Caco-2 (cell line): ENCODE measurements at regions of chr1 and their contacts with region 1.

Region 1: GRCh38 chr1:226062558-226063223 is at the start of gene H3-3A:
- DNase-seq: peak; percentile 97 to 98
- H3K4me3 ChIP-seq: peak within 1 kb of the TSS; percentile 93
- H3K4me3 Mint-ChIP-seq: peak within 1 kb of the TSS; percentile 97
- H3K27ac Mint-ChIP-seq: peak within 1 kb of the TSS; percentile 99
- H3K4me1 ChIP-seq: peaks cover 9% of the 10 kb centered on the region
- H3K4me1 Mint-ChIP-seq: peaks cover 24% of the 10 kb centered on the region
- H3K27me3 ChIP-seq: no peaks in the 10 kb centered on the region
- H3K27me3 Mint-ChIP-seq: no peaks in the 10 kb centered on the region
- CTCF ChIP-seq: no peak
- total RNA-seq, gene H3-3A: 512 and 554 TPM in 2 replicates

Region 2: GRCh38 chr1:226029093-226029496 is 33.6 kb before region 1 on chr1:
- CTCF ChIA-PET with region 1: interaction called, 4 read pairs
- POLR2A ChIA-PET with region 1: interaction called, 12 read pairs
- intact Hi-C with region 1: no loop called
- DNase-seq: peak; percentile 46 to 60
- H3K4me3 ChIP-seq: no peak overlapping the region
- H3K4me3 Mint-ChIP-seq: no peak overlapping the region
- H3K27ac Mint-ChIP-seq: peak overlapping the region; percentile 66
- H3K4me1 ChIP-seq: peaks cover 17% of the 10 kb centered on the region
- H3K4me1 Mint-ChIP-seq: no peaks in the 10 kb centered on the region
- H3K27me3 ChIP-seq: no peaks in the 10 kb centered on the region
- H3K27me3 Mint-ChIP-seq: no peaks in the 10 kb centered on the region
- CTCF ChIP-seq: no peak

Region 3: DNA sequence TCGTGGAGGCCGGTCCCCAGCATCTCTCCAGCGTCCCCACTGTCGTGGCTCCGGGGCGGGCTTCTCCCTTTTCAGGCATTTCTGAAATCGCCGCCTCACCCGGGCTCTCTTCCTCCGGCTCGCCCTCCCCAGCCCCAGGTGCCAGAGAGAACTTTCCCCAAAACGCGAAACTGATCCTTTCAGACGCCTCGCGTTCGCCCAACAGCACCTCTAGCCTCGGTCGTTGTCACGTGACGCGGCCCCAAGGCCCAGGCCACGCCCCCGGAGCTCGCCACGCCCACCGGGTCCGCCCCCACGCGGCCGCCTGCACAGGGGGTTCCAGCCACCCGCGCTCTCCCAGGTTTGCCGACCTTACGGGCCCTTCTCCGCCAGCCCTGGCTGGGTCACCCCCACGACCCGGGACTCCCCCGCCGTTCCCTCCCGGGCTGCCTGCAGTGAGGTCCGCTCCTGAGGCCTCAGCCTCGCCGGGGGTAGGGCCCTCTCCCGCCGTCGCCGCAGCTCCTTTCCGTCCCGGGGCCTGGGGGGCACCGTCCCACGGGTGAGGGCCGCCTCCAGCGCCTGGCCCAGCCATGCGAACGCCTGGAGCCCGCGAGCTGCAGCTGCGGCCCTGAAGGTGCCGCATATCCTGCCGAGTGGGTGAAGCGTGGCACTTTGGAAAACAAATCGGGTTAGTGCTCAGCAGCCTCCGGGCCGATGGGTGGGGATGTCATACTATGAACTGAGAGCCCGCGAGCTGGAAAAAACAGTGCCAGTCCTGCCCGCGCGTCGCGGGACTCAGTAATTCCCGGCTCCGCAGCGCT is 20.8 kb after region 1 on chr1:
- CTCF ChIA-PET with region 1: interaction called, 27 read pairs
- POLR2A ChIA-PET with region 1: interaction called, 14 read pairs
- intact Hi-C with region 1: loop called (anchors 1 kb)
- DNase-seq: peak; percentile 88 to 95
- H3K4me3 ChIP-seq: peak overlapping the region; percentile 74
- H3K4me3 Mint-ChIP-seq: peak overlapping the region; percentile 90
- H3K27ac Mint-ChIP-seq: peak overlapping the region; percentile 60
- H3K4me1 ChIP-seq: no peaks in the 10 kb centered on the region
- H3K4me1 Mint-ChIP-seq: no peaks in the 10 kb centered on the region
- H3K27me3 ChIP-seq: no peaks in the 10 kb centered on the region
- H3K27me3 Mint-ChIP-seq: no peaks in the 10 kb centered on the region
- CTCF ChIP-seq: no peak

Region 4: DNA sequence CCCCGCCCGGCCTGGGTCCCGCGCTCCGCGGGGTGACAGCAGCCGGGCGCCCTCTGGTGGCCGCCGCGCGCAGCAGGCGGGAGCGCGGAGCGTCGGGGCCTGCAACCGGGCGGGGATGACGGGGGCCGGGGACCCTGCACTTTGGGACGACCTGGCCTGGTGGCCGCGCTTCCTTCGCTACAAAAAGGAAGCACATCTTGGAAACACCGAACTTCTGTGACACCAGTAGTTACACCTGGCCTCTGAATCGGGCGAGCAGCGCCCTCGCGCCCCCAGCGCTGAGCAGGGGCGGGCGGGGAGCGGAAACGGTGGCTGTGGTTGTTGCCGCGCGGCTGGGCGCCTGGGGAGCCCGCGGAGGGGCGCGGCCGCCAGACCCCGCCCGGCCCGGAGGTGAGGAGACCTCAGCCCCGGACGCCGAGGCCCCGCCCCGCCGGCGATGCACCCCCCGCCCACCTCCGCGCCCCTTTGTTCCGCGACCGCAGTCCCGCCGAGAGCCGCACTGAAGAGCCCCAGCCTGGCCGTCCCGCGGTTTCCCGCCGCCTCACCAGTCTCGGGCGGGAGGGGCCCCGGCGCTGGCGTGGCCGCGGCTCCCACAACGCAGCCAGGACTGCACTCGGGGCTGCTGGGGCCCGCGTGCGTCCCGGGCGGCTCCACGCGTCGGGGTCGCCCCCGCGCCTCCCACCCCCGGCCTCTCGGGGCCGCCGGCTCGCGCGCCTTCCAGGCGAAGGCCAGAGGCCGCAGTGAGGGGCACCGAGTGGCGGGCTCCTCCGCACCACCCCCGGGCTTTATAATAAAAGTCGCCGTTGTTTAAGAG is 59.1 kb after region 1 on chr1:
- CTCF ChIA-PET with region 1: interaction called, 16 read pairs
- POLR2A ChIA-PET with region 1: interaction called, 4 read pairs
- intact Hi-C with region 1: loop called (anchors 1 kb)
- DNase-seq: peak; percentile 88 to 89
- H3K4me3 ChIP-seq: peak overlapping the region; percentile 80
- H3K4me3 Mint-ChIP-seq: peak overlapping the region; percentile 75
- H3K27ac Mint-ChIP-seq: peak overlapping the region; percentile 78
- H3K4me1 ChIP-seq: peaks cover 11% of the 10 kb centered on the region
- H3K4me1 Mint-ChIP-seq: peaks cover 17% of the 10 kb centered on the region
- H3K27me3 ChIP-seq: no peaks in the 10 kb centered on the region
- H3K27me3 Mint-ChIP-seq: no peaks in the 10 kb centered on the region
- CTCF ChIP-seq: peak; percentile 38 to 73

Region 5: GRCh38 chr1:226186124-226187018 is 123.7 kb after region 1 on chr1 and contains the start of gene ACBD3:
- CTCF ChIA-PET with region 1: no interaction called
- POLR2A ChIA-PET with region 1: interaction called, 4 read pairs
- intact Hi-C with region 1: loop called (anchors 10 kb)
- DNase-seq: peak; percentile 89 to 91
- H3K4me3 ChIP-seq: peak within 1 kb of the TSS; percentile 96
- H3K4me3 Mint-ChIP-seq: peak within 1 kb of the TSS; percentile 92
- H3K27ac Mint-ChIP-seq: peak within 1 kb of the TSS; percentile 85
- H3K4me1 ChIP-seq: peaks cover 16% of the 10 kb centered on the region
- H3K4me1 Mint-ChIP-seq: peaks cover 4% of the 10 kb centered on the region
- H3K27me3 ChIP-seq: no peaks in the 10 kb centered on the region
- H3K27me3 Mint-ChIP-seq: no peaks in the 10 kb centered on the region
- CTCF ChIP-seq: no peak
- total RNA-seq, gene ACBD3: 38.5 and 41.7 TPM in 2 replicates

Region 6: GRCh38 chr1:226209307-226210059 is 146.8 kb after region 1 on chr1:
- CTCF ChIA-PET with region 1: no interaction called
- POLR2A ChIA-PET with region 1: no interaction called
- intact Hi-C with region 1: no loop called
- DNase-seq: no peak
- H3K4me3 ChIP-seq: no peak overlapping the region
- H3K4me3 Mint-ChIP-seq: no peak overlapping the region
- H3K27ac Mint-ChIP-seq: no peak overlapping the region
- H3K4me1 ChIP-seq: no peaks in the 10 kb centered on the region
- H3K4me1 Mint-ChIP-seq: no peaks in the 10 kb centered on the region
- H3K27me3 ChIP-seq: no peaks in the 10 kb centered on the region
- H3K27me3 Mint-ChIP-seq: no peaks in the 10 kb centered on the region
- CTCF ChIP-seq: no peak